A549 (cell line): ENCODE measurements at regions of chr2 and their contacts with region 1.

Region 1: DNA sequence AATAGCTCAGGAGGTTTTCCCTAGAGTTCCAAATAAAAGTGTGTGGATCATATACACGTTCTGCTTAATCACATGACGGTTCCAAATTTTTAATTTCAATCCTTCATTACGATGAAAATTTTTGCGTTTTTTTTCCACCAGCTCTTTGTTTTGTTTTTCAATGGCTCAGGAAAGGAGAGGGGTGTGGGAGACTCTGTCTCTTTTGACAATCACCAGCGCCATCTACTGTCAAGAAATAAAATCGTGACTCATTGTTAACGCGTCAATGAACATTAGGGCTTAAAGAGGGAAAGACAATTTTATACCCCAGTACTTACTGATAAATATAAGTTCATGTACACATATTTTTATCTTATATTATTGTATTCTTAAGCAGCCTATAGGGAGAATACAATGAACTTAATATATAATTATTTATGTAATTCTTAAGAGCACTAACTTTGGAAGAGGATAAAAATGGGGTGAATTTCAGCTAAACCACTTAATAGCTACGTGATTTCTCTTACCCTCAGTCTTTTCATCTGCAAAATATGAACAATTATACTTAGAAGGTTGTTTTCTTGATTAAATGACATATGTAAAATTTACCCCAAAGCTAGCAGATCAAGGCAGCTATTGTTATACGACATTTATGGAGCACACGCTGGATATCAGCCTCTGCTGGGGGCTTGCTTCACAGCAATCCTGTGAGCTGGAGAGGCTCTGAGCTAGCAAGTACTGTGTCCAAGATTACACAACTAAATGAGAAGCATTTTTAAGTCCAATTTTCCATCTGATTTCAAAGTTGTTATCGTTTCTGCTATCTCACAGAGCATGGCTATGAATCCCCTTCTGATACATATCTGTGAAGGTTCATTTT is 47.4 kb upstream of the RMDN2 start:
- DNase-seq: peak; percentile 59
- ATAC-seq: peak; percentile 69 to 90
- H3K4me3 ChIP-seq: no peak overlapping the region
- H3K27ac ChIP-seq: no peak overlapping the region; a peak in 1 of 6 replicates
- H3K4me1 ChIP-seq: no peaks in the 10 kb centered on the region
- CTCF ChIP-seq: peak; percentile 98
- EP300 ChIP-seq: no peak
- POLR2A ChIP-seq: no peak
- RAD21 ChIP-seq: peak; percentile 93 to 95

Region 2: GRCh38 chr2:37344453-37345361 is 533.0 kb before region 1 on chr2 and contains the start of gene QPCT:
- CTCF ChIA-PET with region 1: interaction called, 42 read pairs
- POLR2A ChIA-PET with region 1: no interaction called
- DNase-seq: peak; percentile 60 to 87
- ATAC-seq: peak; percentile 83 to 87
- H3K4me3 ChIP-seq: peak within 1 kb of the TSS; percentile 71
- H3K27ac ChIP-seq: peak within 1 kb of the TSS; percentile 69 to 87
- H3K4me1 ChIP-seq: peaks cover 19% of the 10 kb centered on the region
- CTCF ChIP-seq: no peak
- EP300 ChIP-seq: no peak
- POLR2A ChIP-seq: peak; percentile 32; the same call in 1 of the 2 replicates
- RAD21 ChIP-seq: no peak; a peak in 1 of 5 replicates
- polyA plus RNA-seq, gene QPCT: 42.7 and 68.7 TPM in 2 replicates

Region 3: GRCh38 chr2:37402636-37403035 is 475.1 kb before region 1 on chr2:
- CTCF ChIA-PET with region 1: interaction called, 292 read pairs
- POLR2A ChIA-PET with region 1: no interaction called
- DNase-seq: no peak
- ATAC-seq: no peak
- H3K4me3 ChIP-seq: no peak overlapping the region
- H3K27ac ChIP-seq: no peak overlapping the region
- H3K4me1 ChIP-seq: no peaks in the 10 kb centered on the region
- CTCF ChIP-seq: no peak
- EP300 ChIP-seq: no peak
- POLR2A ChIP-seq: no peak
- RAD21 ChIP-seq: no peak

Region 4: DNA sequence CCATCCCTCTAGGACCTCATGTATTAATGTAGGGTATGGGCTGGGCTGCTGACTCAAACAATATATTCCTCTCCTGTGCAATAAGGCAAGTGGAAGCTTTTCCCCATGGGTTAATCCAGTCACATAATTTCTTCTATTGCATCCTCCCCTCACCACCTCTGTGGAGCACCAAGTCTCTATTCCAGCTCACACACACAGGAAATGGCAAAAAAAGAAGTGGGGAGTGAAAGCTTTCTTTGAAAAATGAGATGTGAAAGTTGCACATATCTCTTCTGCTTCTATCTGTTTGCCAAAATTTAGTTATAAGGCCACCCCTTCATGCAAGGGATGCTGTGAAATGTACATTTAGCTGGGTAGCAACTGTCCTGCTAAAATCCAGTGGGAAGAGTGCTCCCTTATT is 327.5 kb before region 1 on chr2:
- CTCF ChIA-PET with region 1: interaction called, 10 read pairs
- POLR2A ChIA-PET with region 1: no interaction called
- DNase-seq: no peak
- ATAC-seq: no peak
- H3K4me3 ChIP-seq: no peak overlapping the region
- H3K27ac ChIP-seq: no peak overlapping the region
- H3K4me1 ChIP-seq: no peaks in the 10 kb centered on the region
- CTCF ChIP-seq: no peak
- EP300 ChIP-seq: no peak
- POLR2A ChIP-seq: no peak
- RAD21 ChIP-seq: no peak

Region 5: DNA sequence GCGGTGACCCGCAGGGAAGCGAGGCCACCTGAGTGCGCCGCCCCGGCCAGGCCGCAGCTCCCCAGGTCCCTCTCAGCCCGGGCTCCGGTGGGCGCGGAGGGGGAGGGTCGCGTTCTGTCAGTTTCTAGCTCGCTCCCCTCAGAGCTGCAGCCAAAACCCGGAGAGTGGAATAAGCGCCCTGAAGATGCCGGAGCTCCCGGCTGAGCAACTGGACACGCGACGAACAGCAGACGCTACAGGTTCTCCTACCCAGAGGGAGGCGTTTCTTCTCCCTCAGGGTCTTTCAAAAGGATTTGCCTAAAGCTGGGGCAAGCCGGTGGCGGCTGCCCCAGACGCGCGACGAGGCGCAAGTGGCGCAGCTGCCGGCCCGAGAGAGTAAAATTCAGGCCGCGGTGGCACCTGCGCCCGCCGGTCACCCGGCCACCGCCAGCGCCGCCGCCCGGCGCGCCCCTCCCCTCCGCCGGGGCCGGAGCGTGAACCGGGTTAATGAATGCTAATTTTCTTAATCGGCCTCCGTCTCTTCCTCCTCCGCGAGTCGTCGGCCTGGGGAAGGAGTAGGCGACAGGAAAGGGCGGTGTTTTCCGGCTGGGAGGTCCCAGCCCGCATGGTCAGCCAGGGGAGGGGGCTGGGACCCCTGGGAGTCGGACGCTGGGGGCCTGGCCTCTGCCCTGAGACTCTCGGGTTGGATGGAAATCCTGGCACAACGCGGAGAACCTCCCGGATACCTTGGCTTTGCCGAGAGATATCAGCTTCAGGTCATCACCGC is 205.4 kb before region 1 on chr2:
- CTCF ChIA-PET with region 1: interaction called, 10 read pairs
- POLR2A ChIA-PET with region 1: interaction called, 5 read pairs
- DNase-seq: peak; percentile 91 to 94
- ATAC-seq: peak; percentile 67 to 72
- H3K4me3 ChIP-seq: peak overlapping the region; percentile 75
- H3K27ac ChIP-seq: peak overlapping the region; percentile 92 to 98
- H3K4me1 ChIP-seq: peaks cover 57% of the 10 kb centered on the region
- CTCF ChIP-seq: no peak
- EP300 ChIP-seq: no peak
- POLR2A ChIP-seq: no peak; the same call in 1 of the 2 replicates
- RAD21 ChIP-seq: peak; percentile 17 to 32; a peak in 1 of 5 replicates

Region 6: DNA sequence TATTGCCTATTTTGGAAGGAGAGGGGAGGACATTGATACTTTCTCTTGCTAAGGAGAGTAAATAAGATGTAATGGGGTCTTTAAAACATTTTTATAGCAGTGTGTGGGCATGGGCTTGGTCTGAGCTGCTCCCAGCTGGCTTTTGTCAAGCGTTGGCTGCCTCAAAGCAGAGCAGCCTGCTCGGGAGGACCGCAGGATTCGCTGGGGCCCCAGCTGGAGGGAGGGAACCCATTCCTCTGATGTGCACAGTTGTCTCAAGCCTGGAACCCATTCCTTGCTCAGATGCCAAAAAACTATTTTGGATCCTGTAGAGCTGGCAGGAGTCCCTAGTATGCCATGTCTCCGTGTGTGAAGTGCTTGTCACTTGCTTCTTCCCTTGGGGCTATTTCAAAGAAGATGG is 12.0 kb before region 1 on chr2:
- CTCF ChIA-PET with region 1: interaction called, 33 read pairs
- POLR2A ChIA-PET with region 1: no interaction called
- DNase-seq: no peak
- ATAC-seq: no peak
- H3K4me3 ChIP-seq: no peak overlapping the region
- H3K27ac ChIP-seq: no peak overlapping the region
- H3K4me1 ChIP-seq: no peaks in the 10 kb centered on the region
- CTCF ChIP-seq: no peak
- EP300 ChIP-seq: no peak
- POLR2A ChIP-seq: no peak
- RAD21 ChIP-seq: no peak